ENCODE measurements at regions of chr17 and their contacts with region 1.

Region 1: DNA sequence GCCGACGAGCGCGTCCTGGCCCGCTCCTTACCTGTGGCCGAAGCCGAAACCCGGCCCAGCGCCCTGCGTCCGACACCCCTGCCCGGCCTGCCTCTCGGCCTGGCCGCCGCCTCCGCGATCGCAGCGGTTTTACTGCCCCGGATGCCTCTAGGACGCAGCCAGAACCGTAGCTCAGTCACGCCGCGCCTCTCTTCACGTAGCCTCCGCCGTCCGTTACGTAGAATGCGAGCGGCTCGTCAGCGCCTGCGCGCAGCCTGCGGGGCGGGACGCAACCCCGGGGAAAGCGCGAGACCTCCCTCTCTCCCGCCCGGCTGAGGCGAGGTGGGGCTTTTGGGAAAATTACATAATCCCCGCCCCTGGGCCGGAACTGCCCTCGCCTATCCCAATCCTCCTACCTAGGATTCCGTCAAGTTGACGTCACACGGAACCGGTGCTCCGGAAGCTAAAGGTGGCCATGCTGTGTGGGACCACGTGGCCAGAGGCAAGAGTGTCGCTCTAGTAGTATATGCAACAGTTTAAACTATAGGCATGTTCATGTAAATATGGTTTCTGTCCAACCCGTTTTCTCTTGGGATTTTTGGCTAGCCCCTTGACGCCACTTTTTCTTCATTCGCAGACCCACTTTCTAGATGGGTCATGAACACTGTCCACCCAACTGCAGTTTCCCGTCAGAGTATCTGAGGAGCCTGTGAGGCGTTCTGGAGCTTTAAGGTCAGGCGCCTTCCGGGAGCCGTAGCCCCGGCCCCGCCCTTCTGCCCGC is at the start of gene CCDC47:
- DNase-seq: peak; percentile 100
- ATAC-seq: peak; percentile 87
- H3K4me3 ChIP-seq: peak within 1 kb of the TSS; percentile 88
- H3K27ac ChIP-seq: peak within 1 kb of the TSS; percentile 98
- H3K4me1 ChIP-seq: peaks cover 34% of the 10 kb centered on the region
- H3K27me3 ChIP-seq: no peaks in the 10 kb centered on the region
- CTCF ChIP-seq: no peak
- total RNA-seq, gene CCDC47: 147 and 163 TPM in 2 replicates

Region 2: GRCh38 chr17:63722403-63722802 is 51.2 kb before region 1 on chr17:
- CTCF ChIA-PET with region 1: no interaction called
- POLR2A ChIA-PET with region 1: no interaction called
- intact Hi-C with region 1: no loop called
- DNase-seq: no peak
- ATAC-seq: no peak
- H3K4me3 ChIP-seq: no peak overlapping the region
- H3K27ac ChIP-seq: no peak overlapping the region
- H3K4me1 ChIP-seq: no peaks in the 10 kb centered on the region
- H3K27me3 ChIP-seq: no peaks in the 10 kb centered on the region
- CTCF ChIP-seq: no peak

Region 3: GRCh38 chr17:63741221-63742049 is 32.1 kb before region 1 on chr17 and contains the start of gene STRADA:
- CTCF ChIA-PET with region 1: no interaction called
- POLR2A ChIA-PET with region 1: interaction called, 7 read pairs
- intact Hi-C with region 1: loop called (anchors 1 kb)
- DNase-seq: peak; percentile 100
- ATAC-seq: peak; percentile 87
- H3K4me3 ChIP-seq: peak within 1 kb of the TSS; percentile 87
- H3K27ac ChIP-seq: peak within 1 kb of the TSS; percentile 66
- H3K4me1 ChIP-seq: peaks cover 15% of the 10 kb centered on the region; the same call in 1 of the 2 replicates
- H3K27me3 ChIP-seq: no peaks in the 10 kb centered on the region
- CTCF ChIP-seq: no peak
- total RNA-seq, gene STRADA: 17.9 and 26.3 TPM in 2 replicates

Region 4: DNA sequence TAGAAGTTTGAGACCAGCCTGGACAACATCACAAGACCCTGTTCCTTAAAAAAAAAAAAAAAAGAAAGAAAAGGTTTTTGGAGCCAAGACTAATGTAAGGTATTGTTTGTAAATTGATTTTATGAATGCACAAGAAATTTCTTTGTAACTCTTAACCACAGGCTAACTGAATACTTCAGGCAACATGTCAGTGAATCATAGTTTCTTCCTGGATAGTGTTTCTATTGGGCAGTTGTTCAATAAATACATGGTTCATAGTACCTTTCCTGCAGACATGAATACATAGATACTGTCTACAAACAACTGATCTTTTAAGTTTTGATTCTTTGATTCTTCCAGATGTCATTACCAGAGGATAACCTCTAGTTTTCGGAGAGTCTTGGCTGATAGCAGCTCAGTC is 12.0 kb after region 1 on chr17:
- CTCF ChIA-PET with region 1: no interaction called
- POLR2A ChIA-PET with region 1: no interaction called
- intact Hi-C with region 1: loop called (anchors 1 kb)
- DNase-seq: peak; percentile 82
- ATAC-seq: peak; percentile 78
- H3K4me3 ChIP-seq: no peak overlapping the region
- H3K27ac ChIP-seq: peak overlapping the region; percentile 49
- H3K4me1 ChIP-seq: peaks cover 59% of the 10 kb centered on the region
- H3K27me3 ChIP-seq: no peaks in the 10 kb centered on the region
- CTCF ChIP-seq: no peak

Region 5: GRCh38 chr17:63827002-63827771 is 53.6 kb after region 1 on chr17 and contains the starts of genes FTSJ3 and PSMC5:
- CTCF ChIA-PET with region 1: interaction called, 4 read pairs
- POLR2A ChIA-PET with region 1: interaction called, 13 read pairs
- intact Hi-C with region 1: loop called (anchors 1 kb)
- DNase-seq: peak; percentile 97
- ATAC-seq: peak; percentile 91
- H3K4me3 ChIP-seq: peak within 1 kb of the TSS; percentile 89
- H3K27ac ChIP-seq: peak within 1 kb of the TSS; percentile 81
- H3K4me1 ChIP-seq: peaks cover 22% of the 10 kb centered on the region
- H3K27me3 ChIP-seq: no peaks in the 10 kb centered on the region
- CTCF ChIP-seq: peak; percentile 63
- total RNA-seq, gene FTSJ3: 82.4 and 112 TPM in 2 replicates
- total RNA-seq, gene PSMC5: 163 and 205 TPM in 2 replicates